ENCODE measurements at regions of chr1 and their contacts with region 1.

Region 1: DNA sequence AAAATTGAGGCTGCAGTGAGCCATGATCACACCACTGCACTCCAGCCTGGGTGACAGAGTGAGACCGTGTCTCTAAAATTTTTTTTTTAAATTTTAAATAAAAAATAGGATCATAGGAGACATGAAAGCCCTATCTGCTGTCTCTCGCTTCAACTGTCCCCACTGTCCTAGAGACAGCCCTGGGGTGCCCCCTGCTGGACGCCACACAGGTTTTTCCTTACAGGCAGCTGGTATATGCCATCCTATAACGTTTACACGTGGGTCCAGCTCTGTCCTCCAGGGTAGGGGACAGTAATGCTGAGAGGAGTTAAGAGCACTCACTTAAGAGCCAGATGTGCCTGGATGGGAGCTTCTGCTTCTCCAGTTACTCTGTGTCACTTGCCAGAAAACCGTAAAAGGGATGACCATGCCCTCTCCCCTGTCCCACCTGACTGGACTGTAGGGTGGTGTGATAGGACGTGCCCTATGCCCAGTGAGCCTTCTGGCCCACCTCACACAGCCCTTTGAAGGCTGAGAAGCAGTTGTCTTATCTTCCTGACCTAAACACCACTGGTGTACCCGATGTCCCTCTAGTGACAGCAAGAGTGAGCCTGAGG is 8.5 kb downstream of the FBXO2 start:
- DNase-seq: peak; percentile 69

Region 2: DNA sequence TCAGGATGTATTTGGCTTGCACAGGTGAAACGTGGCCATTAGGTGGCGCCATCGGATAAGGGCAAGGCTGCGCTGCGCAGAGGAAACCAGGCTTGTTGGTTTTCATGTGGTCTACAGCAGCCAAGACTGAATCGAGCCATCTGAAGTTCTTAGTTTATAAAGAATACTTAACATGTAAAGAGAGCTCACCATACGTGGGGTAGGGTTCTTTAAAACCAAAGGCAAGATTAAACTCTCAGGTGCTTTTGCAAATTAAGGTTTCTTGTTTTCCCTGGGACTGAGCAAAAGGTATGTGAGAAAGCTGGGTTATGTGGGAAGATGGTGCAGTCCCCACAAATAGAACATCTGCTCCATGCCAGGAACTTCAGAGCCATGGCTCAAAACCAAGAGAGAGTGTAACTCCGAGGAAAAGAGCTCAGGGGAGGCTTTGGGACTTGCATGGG is 608.0 kb before region 1 on chr1:
- in situ Hi-C with region 1: loop called (anchors 25 kb)
- DNase-seq: peak; percentile 86

Region 3: GRCh38 chr1:11320153-11320936 is 325.4 kb before region 1 on chr1:
- in situ Hi-C with region 1: loop called (anchors 25 kb)
- DNase-seq: peak; percentile 25